A549 (cell line): ENCODE measurements at regions of chr17 and their contacts with region 1.

Region 1: GRCh38 chr17:58587702-58588254 is 73.3 kb upstream of the MTMR4 start:
- DNase-seq: peak; percentile 69 to 81
- ATAC-seq: peak; percentile 91 to 96
- H3K4me3 ChIP-seq: no peak overlapping the region
- H3K27ac ChIP-seq: no peak overlapping the region
- H3K4me1 ChIP-seq: no peaks in the 10 kb centered on the region
- CTCF ChIP-seq: peak; percentile 93
- EP300 ChIP-seq: no peak
- POLR2A ChIP-seq: no peak
- RAD21 ChIP-seq: peak; percentile 89

Region 2: GRCh38 chr17:58565780-58566189 is 22.0 kb before region 1 on chr17:
- CTCF ChIA-PET with region 1: interaction called, 12 read pairs
- POLR2A ChIA-PET with region 1: no interaction called
- DNase-seq: no peak
- ATAC-seq: no peak
- H3K4me3 ChIP-seq: no peak overlapping the region
- H3K27ac ChIP-seq: no peak overlapping the region
- H3K4me1 ChIP-seq: no peaks in the 10 kb centered on the region
- CTCF ChIP-seq: no peak
- EP300 ChIP-seq: no peak
- POLR2A ChIP-seq: no peak
- RAD21 ChIP-seq: no peak

Region 3: GRCh38 chr17:58605470-58605869 is 17.7 kb after region 1 on chr17:
- CTCF ChIA-PET with region 1: interaction called, 24 read pairs
- POLR2A ChIA-PET with region 1: no interaction called
- DNase-seq: no peak
- ATAC-seq: peak; percentile 55 to 61; a peak in 4 of 6 replicates
- H3K4me3 ChIP-seq: no peak overlapping the region
- H3K27ac ChIP-seq: no peak overlapping the region
- H3K4me1 ChIP-seq: no peaks in the 10 kb centered on the region
- CTCF ChIP-seq: no peak
- EP300 ChIP-seq: no peak
- POLR2A ChIP-seq: no peak
- RAD21 ChIP-seq: no peak